ENCODE measurements at regions of chr20 and their contacts with region 1.

Region 1: GRCh38 chr20:35207950-35208611 is 18.4 kb upstream of the MMP24 start:
- DNase-seq: peak; percentile 82 to 89 (median 83)
- ATAC-seq: peak; percentile 95
- H3K4me3 ChIP-seq: peak overlapping the region; percentile 7
- H3K27ac ChIP-seq: peak overlapping the region; percentile 70
- H3K4me1 ChIP-seq: peaks cover 2% of the 10 kb centered on the region
- H3K27me3 ChIP-seq: no peaks in the 10 kb centered on the region

Region 2: DNA sequence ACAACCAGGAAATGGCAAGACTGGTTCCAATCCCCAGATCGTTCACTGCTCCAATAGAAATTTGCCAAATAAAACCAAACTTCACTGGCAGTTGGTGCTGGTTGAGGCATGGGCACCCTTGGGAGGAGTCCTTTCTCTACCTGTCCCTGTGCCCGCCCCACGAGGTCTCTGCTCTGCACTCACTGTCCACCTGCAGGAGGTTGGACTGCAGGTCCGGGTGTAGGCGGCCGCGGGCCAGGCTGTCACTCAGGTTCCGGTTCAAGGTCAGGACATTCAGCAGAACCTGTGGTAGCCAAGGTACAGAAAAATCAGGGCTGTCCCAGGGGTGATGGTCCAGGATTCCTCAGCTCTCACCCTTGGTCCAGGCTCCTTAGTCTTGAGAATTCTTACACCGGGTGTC is 358.3 kb before region 1 on chr20:
- intact Hi-C with region 1: loop called in 1 of 4 experiments (anchors 10 kb)
- DNase-seq: no peak
- ATAC-seq: no peak
- H3K4me3 ChIP-seq: no peak overlapping the region
- H3K27ac ChIP-seq: no peak overlapping the region
- H3K4me1 ChIP-seq: no peaks in the 10 kb centered on the region
- H3K27me3 ChIP-seq: no peaks in the 10 kb centered on the region

Region 3: GRCh38 chr20:35092524-35093266 is 115.4 kb before region 1 on chr20 and contains the start of gene TRPC4AP:
- intact Hi-C with region 1: loop called in 3 of 4 experiments (anchors 5 kb)
- DNase-seq: peak; percentile 92 to 97 (median 95)
- ATAC-seq: peak; percentile 95 to 96
- H3K4me3 ChIP-seq: peak within 1 kb of the TSS; percentile 94
- H3K27ac ChIP-seq: peak within 1 kb of the TSS; percentile 97
- H3K4me1 ChIP-seq: peaks cover 2% of the 10 kb centered on the region
- H3K27me3 ChIP-seq: no peaks in the 10 kb centered on the region
- total RNA-seq, gene TRPC4AP: 34.3 to 44.6 (median 36.6) TPM

Region 4: DNA sequence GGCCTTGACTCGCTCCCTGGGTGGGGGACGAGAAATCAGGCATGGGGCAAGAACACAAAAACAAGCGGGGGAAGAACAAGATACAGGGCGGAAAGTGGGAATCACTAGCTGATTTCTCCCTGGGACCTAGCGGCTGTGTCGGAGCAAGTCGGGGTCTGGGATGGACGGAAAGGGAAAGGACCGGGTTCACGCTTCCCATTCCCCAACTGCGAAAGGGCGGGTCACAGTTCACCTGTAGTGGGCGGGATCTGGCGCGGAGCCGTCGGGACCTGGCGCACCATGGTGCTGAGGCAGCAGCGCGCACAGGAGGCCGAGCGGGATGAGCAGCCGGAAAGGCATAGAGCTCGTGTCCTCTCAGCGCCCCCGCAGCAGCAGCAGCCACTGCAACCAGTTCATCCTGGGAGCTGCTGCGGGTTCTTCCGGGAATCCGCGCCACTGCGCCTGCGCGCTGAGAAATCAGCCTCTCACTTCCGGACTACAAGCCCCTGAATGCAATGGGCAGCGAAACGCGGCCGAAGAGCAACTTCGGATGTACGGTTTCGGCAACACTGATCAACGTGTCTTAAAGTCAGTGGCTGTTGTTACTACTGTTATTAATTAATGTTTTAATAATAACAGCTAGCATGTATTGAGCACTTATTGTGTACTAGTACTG is 61.0 kb before region 1 on chr20 and contains the start of gene EDEM2:
- intact Hi-C with region 1: loop called (anchors 2 to 10 kb)
- DNase-seq: peak; percentile 95 to 98 (median 97)
- ATAC-seq: peak; percentile 95 to 96
- H3K4me3 ChIP-seq: peak within 1 kb of the TSS; percentile 52
- H3K27ac ChIP-seq: peak within 1 kb of the TSS; percentile 48
- H3K4me1 ChIP-seq: no peaks in the 10 kb centered on the region
- H3K27me3 ChIP-seq: no peaks in the 10 kb centered on the region
- total RNA-seq, gene EDEM2: 15.1 to 25.9 (median 15.4) TPM